H1 (cell line): ENCODE measurements at regions of chr9 and their contacts with region 1.

Region 1: GRCh38 chr9:18791074-18791473 is 241.9 kb downstream of the SAXO1 start:
- DNase-seq: peak; percentile 21 to 67
- H3K4me3 ChIP-seq: no peak overlapping the region
- H3K27ac ChIP-seq: no peak overlapping the region
- H3K4me1 ChIP-seq: no peaks in the 10 kb centered on the region
- H3K27me3 ChIP-seq: no peaks in the 10 kb centered on the region
- CTCF ChIP-seq: peak; percentile 58 to 80 (median 76)
- EP300 ChIP-seq: no peak
- POLR2A ChIP-seq: no peak
- RAD21 ChIP-seq: peak; percentile 81 to 87

Region 2: DNA sequence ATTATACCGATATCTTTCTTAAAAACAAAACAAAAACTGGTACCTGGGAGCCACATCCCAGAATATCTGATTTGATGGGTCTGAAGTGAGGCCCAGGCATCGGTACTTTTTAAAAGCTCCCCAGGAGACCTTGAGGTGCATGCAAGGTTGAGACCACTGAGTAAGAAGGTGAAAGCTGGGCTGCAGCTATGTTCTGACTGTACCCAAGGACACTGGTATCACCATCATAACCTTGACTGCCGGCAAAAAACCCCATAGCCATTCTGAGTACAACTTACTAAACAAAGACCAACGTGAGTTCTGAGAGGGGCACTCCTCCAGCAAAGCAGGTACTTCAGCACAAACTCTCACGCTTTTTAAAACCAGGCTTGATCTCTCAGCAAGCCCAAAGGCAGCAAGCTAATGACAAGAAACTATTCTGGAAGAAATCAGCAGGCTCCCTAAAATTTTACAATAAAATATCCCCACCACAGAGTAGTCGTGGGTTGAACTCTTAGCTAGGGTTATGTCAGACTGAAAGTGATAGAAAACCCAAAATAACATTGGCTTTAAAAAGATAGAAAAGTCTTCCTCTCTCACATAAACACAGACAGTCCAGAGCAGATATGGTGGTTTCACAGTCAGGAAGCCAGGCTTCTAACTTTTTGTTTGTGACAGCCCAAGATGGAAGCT is 22.0 kb before region 1 on chr9:
- CTCF ChIA-PET with region 1: interaction called, 10 read pairs
- POLR2A ChIA-PET with region 1: no interaction called
- DNase-seq: no peak
- H3K4me3 ChIP-seq: no peak overlapping the region
- H3K27ac ChIP-seq: no peak overlapping the region
- H3K4me1 ChIP-seq: no peaks in the 10 kb centered on the region; a peak in 1 of 7 replicates
- H3K27me3 ChIP-seq: no peaks in the 10 kb centered on the region
- CTCF ChIP-seq: no peak
- EP300 ChIP-seq: no peak
- POLR2A ChIP-seq: no peak
- RAD21 ChIP-seq: no peak

Region 3: GRCh38 chr9:18776836-18777820 is 13.9 kb before region 1 on chr9:
- CTCF ChIA-PET with region 1: interaction called, 22 read pairs
- POLR2A ChIA-PET with region 1: no interaction called
- DNase-seq: no peak
- H3K4me3 ChIP-seq: no peak overlapping the region
- H3K27ac ChIP-seq: no peak overlapping the region
- H3K4me1 ChIP-seq: no peaks in the 10 kb centered on the region
- H3K27me3 ChIP-seq: no peaks in the 10 kb centered on the region
- CTCF ChIP-seq: no peak
- EP300 ChIP-seq: no peak
- POLR2A ChIP-seq: no peak
- RAD21 ChIP-seq: no peak

Region 4: GRCh38 chr9:19018201-19018600 is 227.1 kb after region 1 on chr9:
- CTCF ChIA-PET with region 1: interaction called, 12 read pairs
- POLR2A ChIA-PET with region 1: no interaction called
- DNase-seq: no peak
- H3K4me3 ChIP-seq: no peak overlapping the region
- H3K27ac ChIP-seq: no peak overlapping the region
- H3K4me1 ChIP-seq: no peaks in the 10 kb centered on the region
- H3K27me3 ChIP-seq: no peaks in the 10 kb centered on the region
- CTCF ChIP-seq: no peak
- EP300 ChIP-seq: no peak
- POLR2A ChIP-seq: no peak
- RAD21 ChIP-seq: no peak